Dorsolateral prefrontal cortex (tissue), 120 donors: ENCODE measurements at regions of chr1 and their contacts with region 1.

Region 1: GRCh38 chr1:45303582-45304310 is 22.9 kb upstream of the HPDL start:
- DNase-seq: peak; percentile 93 to 99 (median 97)
- H3K4me3 ChIP-seq: peak overlapping the region; percentile 48 to 99 (median 87)
- H3K27ac ChIP-seq: peak overlapping the region; percentile 23 to 97 (median 93)
- H3K27me3 ChIP-seq: no peaks in the 10 kb centered on the region
- CTCF ChIP-seq: peak; percentile 38 to 94 (median 81)

Region 2: DNA sequence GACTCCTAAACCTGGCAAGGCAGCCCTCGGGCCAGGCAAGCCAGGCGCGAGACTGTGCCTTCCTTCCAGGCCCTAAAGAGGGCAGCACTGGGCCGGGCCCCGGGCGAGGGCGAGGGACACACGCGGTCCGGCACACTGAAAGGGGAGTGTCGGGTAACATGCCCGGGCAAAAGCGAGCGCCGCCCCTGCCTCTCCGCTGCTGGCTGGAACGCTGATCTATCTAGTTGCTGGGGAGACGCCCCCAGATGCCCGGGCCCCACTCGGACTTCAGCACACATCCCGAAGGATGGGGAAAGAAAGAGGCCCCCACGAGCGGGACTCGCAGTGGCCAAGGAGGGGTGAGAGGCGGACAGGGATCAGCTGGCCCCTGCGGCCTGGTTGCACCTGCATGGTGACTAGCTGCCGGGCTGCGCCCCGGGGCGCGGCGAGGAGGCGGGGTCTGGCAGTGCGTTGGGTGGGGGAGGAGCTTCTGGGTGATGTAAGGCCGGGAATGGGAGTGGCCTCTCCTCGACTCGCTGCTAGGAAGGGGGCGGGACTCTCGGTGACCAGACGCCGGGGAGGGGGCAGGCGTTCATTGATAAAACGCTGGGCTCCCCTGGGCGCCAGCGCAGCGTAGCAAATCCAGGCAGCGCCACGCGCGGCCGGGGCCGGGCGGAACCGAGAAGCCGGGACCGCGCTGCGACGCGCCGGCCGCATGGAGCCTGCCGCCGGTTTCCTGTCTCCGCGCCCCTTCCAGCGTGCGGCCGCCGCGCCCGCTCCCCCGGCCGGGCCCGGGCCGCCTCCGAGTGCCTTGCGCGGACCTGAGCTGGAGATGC is 503.8 kb before region 1 on chr1 and contains the start of gene PLK3:
- intact Hi-C with region 1: loop called in 1 of 2 experiments (anchors 10 kb)
- DNase-seq: peak; percentile 95 to 99 (median 98)
- H3K4me3 ChIP-seq: peak within 1 kb of the TSS; percentile 47 to 96 (median 85)
- H3K27ac ChIP-seq: peak within 1 kb of the TSS; percentile 70 to 98 (median 94)
- H3K27me3 ChIP-seq: no peaks in the 10 kb centered on the region
- CTCF ChIP-seq: peak; percentile 55 to 96 (median 87)
- total RNA-seq, gene PLK3: 3.7 to 23.1 (median 11.1) TPM

Region 3: DNA sequence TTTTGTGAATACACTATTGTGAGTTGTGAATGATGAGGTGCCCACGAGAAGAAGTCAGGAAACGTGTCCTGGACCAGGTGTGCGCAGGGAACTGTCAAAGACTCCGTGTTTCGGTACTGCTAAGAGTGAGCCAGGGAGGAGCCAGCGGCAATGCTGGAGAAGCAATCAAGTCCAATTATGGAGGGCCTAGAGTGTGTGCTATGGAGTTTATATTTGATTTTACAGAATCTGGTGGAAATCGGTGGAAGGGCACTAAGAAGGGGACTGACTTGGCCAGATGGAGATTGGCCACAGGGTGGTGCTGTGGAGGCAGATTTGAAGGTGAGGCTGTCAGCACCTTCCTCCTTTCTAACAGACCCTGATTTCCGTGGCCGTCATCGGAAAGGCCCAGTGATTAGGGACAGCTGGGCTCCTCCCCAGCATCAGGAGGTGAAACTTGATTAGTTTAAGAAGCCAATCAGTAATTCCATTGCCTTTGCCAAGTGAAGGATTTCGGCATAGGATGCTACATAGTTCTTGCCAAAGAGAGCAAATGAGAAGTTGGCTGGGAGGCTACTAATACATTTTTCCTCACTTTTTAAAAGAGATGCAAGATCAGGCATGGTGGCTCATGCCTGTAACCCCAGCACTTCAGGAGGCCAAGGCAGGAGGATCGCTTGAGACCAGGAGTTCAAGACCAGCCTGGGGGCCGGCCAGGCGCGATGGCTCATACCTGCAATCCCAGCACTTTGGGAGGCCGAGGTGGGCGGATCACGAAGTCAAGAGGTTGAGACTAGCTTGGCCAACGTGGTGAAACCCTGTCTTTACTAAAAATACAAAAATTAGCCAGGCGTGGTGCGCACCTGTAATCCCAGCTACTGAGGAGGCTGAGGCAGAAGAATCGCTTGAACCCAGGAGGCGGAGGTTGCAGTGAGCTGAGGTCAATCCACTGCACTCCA is 467.7 kb before region 1 on chr1:
- intact Hi-C with region 1: loop called in 1 of 2 experiments (anchors 10 kb)
- DNase-seq: peak; percentile 63 to 87 (median 84)
- H3K4me3 ChIP-seq: peak overlapping the region in 8 of 59 donors; percentile 3 to 31 (median 21)
- H3K27ac ChIP-seq: peak overlapping the region in 5 of 59 donors; percentile 5 to 53 (median 21)
- H3K27me3 ChIP-seq: no peaks in the 10 kb centered on the region
- CTCF ChIP-seq: peak; percentile 59 to 95 (median 88)

Region 4: DNA sequence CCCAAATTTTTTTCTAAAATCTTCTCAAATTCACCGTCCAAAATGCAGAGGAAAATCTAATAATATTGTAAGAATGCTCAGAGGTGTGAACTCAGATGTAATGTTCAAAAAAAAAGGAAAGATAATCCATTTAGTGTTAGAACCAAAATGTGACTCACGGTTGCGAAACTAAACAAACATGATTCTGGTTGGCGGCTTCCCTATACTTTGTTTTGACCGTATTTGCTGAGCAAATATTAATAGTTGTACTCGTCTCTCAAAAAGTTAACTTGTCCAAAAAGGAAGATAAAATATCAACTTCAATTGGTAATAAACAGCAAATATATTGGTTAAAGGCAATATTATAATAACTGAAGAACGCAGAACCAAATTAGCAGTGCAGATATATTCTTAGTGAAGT is 131.7 kb before region 1 on chr1:
- intact Hi-C with region 1: no loop called
- DNase-seq: no peak
- H3K4me3 ChIP-seq: no peak overlapping the region
- H3K27ac ChIP-seq: no peak overlapping the region
- H3K27me3 ChIP-seq: no peaks in the 10 kb centered on the region
- CTCF ChIP-seq: no peak

Region 5: DNA sequence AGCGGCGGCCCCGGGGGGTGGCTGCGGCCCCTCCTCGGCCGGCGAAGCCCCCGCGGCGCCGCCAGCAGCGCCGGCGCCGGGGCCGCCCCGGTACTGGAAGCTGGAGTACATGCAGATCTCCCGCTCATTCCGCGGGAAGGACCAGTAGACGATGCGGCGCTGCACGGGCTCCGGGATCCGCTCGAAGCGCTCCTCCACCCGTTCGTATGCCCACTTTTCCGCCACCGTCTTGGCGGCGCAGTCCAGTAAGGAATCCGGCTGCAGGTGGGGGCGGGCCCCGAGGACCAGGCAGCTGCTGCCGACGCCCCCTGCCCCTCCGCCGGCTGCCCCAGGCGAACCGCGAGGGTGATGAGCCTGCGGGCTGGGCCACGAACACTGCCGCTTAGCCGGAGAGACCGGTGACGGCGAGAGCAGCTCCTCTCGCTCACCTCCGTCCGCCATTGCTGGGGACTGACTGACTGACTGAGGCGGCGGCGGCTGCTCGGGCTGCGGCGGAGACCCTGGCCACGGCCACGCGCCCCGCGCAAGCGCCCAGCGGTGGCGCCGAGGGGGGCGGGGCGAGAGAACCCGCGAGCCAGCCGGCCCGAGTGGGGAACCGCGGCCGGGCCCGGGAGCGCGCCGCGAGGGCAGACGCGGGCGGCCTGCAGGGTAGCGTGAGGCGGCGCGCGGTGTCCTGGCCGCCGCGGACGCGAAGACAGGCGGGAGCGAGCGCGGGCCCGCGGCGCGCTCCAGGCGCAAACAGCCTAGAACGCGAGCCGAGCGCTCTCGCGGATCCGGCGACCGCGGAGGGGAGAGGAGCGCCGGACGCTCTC is 97.6 kb before region 1 on chr1 and contains the start of gene ZSWIM5:
- intact Hi-C with region 1: loop called (anchors 2 to 5 kb)
- DNase-seq: peak; percentile 48 to 87 (median 71)
- H3K4me3 ChIP-seq: peak within 1 kb of the TSS; percentile 66 to 96 (median 89)
- H3K27ac ChIP-seq: peak within 1 kb of the TSS; percentile 79 to 98 (median 95)
- H3K27me3 ChIP-seq: no peaks in the 10 kb centered on the region
- CTCF ChIP-seq: peak in 5 of 56 donors; percentile 9 to 29 (median 13)
- total RNA-seq, gene ZSWIM5: 5.6 to 11.4 (median 8.0) TPM

Region 6: DNA sequence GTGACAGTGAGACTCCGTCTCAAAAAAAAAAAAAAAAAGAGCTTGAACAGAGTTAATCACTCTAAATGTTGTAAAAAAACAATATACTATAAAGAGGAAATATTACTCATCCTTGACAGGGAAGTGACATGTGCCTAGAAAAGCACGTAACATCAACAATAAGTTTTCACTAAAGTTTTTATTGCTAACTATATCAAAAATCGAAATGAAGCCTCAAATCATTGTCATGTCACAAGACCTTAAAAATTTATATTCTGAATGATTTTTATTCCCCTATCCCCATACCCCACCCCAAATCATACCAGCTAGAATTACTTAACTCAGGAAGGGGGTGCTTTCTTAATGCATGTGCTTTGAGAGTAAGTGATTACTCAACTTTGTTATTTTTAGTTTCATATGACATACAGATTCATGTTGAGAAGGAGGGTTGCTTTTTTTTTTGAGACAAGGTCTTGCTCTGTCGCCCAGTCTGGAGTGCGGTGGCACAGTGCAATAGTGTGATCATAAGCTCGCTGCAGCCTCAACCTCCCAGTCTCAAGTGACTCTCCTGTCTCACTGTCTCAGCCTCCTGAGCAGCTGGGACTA is 90.1 kb after region 1 on chr1:
- intact Hi-C with region 1: no loop called
- DNase-seq: no peak
- H3K4me3 ChIP-seq: no peak overlapping the region
- H3K27ac ChIP-seq: peak overlapping the region in 2 of 59 donors; percentile 6 to 30
- H3K27me3 ChIP-seq: no peaks in the 10 kb centered on the region
- CTCF ChIP-seq: no peak

Region 7: DNA sequence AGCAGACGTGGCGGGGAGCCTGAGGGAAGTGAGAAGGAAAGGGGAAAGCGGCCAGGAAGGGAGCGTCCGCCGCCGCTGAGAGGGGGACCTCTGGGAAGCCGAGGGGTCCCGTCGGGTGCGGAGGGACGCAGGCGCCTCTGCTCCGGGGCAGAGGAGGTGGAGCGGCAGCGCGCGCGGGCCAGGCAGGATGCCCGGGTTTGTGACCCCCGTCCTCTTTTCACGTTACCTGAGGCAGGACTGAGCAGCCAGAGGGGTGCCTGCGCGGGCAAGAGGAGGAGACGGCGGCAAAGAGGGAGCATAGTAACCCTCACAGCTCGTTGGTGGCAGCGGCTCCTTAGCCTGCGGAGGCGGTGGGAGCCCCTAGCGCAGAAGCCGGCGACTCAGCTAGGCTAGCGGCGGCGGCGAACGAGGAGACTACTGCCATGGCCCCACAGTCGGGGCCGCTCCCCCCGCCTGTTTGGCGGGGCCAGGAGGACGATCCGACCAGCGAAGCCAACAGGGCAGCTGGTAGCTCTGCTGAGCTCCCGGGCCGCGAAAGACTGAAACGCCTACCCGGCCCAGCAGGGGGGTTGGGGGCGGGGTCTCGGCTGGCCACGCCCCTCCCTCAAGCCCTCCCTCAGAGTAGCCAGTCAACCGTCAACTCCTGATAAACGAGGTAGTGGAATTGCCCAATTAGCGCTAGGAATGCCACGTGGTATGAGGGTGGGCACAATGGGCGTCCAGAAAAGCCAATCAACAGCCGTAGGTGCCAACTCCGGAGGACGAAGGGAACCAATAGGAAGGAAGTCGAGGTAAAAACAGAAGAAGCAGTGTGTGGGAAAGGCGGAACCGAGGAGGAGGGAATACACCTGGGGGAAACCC is 187.1 kb after region 1 on chr1 and contains the start of gene TESK2:
- intact Hi-C with region 1: loop called in 1 of 2 experiments (anchors 2 kb)
- DNase-seq: peak; percentile 96 to 99 (median 98)
- H3K4me3 ChIP-seq: peak within 1 kb of the TSS; percentile 68 to 100 (median 94)
- H3K27ac ChIP-seq: peak within 1 kb of the TSS; percentile 18 to 96 (median 89)
- H3K27me3 ChIP-seq: no peaks in the 10 kb centered on the region
- CTCF ChIP-seq: peak in 36 of 56 donors; percentile 2 to 56 (median 34)
- total RNA-seq, gene TESK2: 4.1 to 32.6 (median 11.2) TPM